ENCODE measurements at regions of chr4 and their contacts with region 1.

Region 1: DNA sequence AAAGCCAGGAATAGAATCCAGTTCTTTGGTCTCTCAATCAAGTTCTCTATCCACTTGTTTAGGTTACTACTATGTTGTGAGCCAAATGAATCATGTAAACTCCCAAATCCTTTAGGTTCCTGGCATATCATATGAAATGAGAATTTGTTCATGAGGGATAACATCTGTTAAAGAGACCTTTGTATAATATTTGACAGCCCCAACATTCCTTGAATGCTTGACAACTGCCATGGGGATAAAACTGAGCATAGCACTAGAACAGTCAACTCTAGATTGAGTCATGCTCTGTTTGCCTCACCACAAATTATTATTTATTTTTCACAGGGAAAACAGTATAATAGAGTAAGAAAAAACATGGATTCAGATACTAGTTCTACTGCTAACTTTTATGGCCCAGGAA is 93.3 kb downstream of the NAA11 start:
- DNase-seq: no peak
- H3K4me3 Mint-ChIP-seq: no peak overlapping the region
- H3K27ac Mint-ChIP-seq: no peak overlapping the region
- H3K4me1 Mint-ChIP-seq: no peaks in the 10 kb centered on the region
- H3K27me3 Mint-ChIP-seq: peaks cover 1% of the 10 kb centered on the region

Region 2: GRCh38 chr4:78971326-78971725 is 261.2 kb before region 1 on chr4:
- intact Hi-C with region 1: loop called (anchors 10 kb)
- DNase-seq: no peak
- H3K4me3 Mint-ChIP-seq: no peak overlapping the region
- H3K27ac Mint-ChIP-seq: no peak overlapping the region
- H3K4me1 Mint-ChIP-seq: no peaks in the 10 kb centered on the region
- H3K27me3 Mint-ChIP-seq: peaks cover 9% of the 10 kb centered on the region